ENCODE measurements at regions of chr11 and their contacts with region 1.

Region 1: GRCh38 chr11:113896156-113896879 is 8.3 kb upstream of the HTR3B start:
- DNase-seq: no peak
- H3K4me3 ChIP-seq: no peak overlapping the region
- CTCF ChIP-seq: peak; percentile 64

Region 2: DNA sequence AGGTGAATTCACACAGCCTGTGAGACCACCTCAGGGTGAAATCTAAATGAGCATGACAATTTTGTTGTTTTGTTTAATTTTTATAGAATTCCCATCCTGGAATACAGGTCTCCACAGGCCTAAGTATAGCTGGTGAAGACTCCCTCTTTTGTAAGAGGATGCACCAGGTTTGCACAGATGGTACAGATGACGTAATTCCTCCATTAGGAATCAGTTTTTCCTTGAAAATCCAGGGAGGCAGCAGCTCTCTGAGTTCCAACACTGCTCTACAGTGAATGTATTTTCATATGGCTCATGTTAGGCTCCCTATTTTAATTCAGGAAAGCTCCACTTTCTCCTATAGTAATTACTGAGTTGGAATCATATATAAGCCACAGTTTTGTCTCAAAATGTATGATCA is 68.1 kb before region 1 on chr11:
- CTCF ChIA-PET with region 1: no interaction called
- POLR2A ChIA-PET with region 1: no interaction called
- DNase-seq: no peak
- H3K4me3 ChIP-seq: no peak overlapping the region
- CTCF ChIP-seq: no peak

Region 3: DNA sequence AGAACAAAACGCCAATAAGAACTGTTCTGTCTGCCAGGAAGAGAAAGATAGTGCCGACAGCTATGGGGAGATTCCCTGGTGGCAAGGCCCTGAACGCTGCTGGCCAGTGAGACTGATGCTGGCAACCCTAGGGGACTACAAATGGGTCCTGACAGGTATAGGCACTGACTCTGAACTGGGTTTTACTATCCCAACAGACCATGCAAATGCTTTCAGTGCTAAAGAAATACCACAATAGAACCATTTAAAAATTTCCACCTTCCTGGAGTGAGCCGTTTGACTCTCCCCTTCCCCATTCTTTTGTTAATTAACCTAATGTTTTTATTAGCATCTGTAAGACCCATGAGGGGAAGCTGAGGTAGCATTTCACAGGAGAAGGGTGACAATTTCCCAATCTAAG is 46.6 kb before region 1 on chr11:
- CTCF ChIA-PET with region 1: no interaction called
- POLR2A ChIA-PET with region 1: no interaction called
- DNase-seq: no peak
- H3K4me3 ChIP-seq: no peak overlapping the region
- CTCF ChIP-seq: no peak

Region 4: DNA sequence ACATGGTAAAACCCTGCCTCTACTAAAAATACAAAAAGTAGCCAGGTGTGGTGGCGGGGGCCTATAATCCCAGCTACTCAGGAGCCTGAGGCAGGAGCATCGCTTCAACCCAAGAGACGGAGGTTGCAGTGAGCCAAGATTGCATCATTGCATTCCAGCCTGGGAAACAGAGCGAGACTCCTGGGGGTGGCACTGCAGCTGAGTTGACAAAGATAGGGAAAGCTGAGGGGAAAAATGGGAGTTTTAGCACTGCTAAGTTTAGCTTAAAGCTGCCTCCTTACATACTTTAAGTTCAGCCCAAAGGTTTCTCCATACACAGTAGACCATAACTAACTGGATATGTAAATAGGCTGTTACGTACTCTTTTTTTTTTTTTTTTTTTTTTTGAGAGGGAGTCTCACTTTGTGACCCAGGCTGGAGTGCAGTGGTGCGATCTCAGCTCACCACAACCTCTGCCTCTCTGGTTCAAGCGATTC is 11.9 kb before region 1 on chr11:
- CTCF ChIA-PET with region 1: interaction called, 19 read pairs
- POLR2A ChIA-PET with region 1: no interaction called
- DNase-seq: no peak
- H3K4me3 ChIP-seq: no peak overlapping the region
- CTCF ChIP-seq: no peak